CD4-positive, alpha-beta T cell (primary cell): ENCODE measurements at regions of chr12 and their contacts with region 1.

Region 1: DNA sequence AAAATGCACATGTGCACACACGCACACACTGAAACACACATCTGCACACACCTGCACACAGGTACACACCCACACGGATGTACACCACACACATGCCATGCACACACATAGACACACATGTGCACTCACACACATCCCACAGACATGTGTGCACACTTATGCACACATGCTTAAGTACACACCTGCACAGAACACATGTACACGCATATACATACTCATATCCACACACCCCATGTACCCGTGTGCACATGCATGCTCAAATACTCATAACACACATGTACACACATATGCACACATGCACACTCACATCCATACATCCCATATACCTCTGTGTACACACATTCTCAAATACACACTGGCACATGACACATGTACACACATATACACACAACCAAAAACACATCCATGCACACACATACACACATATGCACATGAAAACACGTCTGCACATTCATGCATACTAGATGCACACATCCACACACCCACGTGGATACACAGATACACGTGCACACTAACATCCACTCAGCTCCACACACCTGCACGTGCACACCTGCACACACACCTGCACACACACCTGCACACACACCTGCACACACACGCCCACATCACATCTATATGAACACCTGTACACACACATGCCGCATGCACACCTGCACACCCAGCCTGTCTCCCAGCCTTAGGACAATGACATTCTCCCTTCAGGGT is 336.7 kb downstream of the ADGRD1 start:
- DNase-seq: no peak
- ATAC-seq: no peak
- H3K4me3 ChIP-seq: no peak overlapping the region
- H3K4me3 Mint-ChIP-seq: no peak overlapping the region
- H3K27ac ChIP-seq: no peak overlapping the region
- H3K27ac Mint-ChIP-seq: no peak overlapping the region
- H3K4me1 ChIP-seq: no peaks in the 10 kb centered on the region
- H3K4me1 Mint-ChIP-seq: no peaks in the 10 kb centered on the region
- H3K27me3 ChIP-seq: no peaks in the 10 kb centered on the region
- H3K27me3 Mint-ChIP-seq: peaks cover 11% of the 10 kb centered on the region
- CTCF ChIP-seq: no peak

Region 2: GRCh38 chr12:131279281-131279921 is 11.0 kb before region 1 on chr12:
- CTCF ChIA-PET with region 1: no interaction called
- POLR2A ChIA-PET with region 1: no interaction called
- intact Hi-C with region 1: no loop called
- DNase-seq: no peak
- ATAC-seq: no peak
- H3K4me3 ChIP-seq: no peak overlapping the region
- H3K4me3 Mint-ChIP-seq: no peak overlapping the region
- H3K27ac ChIP-seq: no peak overlapping the region
- H3K27ac Mint-ChIP-seq: no peak overlapping the region
- H3K4me1 ChIP-seq: no peaks in the 10 kb centered on the region
- H3K4me1 Mint-ChIP-seq: no peaks in the 10 kb centered on the region
- H3K27me3 ChIP-seq: no peaks in the 10 kb centered on the region
- H3K27me3 Mint-ChIP-seq: no peaks in the 10 kb centered on the region
- CTCF ChIP-seq: no peak

Region 3: GRCh38 chr12:131390384-131391334 is 100.3 kb after region 1 on chr12:
- CTCF ChIA-PET with region 1: no interaction called
- POLR2A ChIA-PET with region 1: no interaction called
- intact Hi-C with region 1: no loop called
- DNase-seq: no peak
- ATAC-seq: no peak
- H3K4me3 ChIP-seq: no peak overlapping the region
- H3K4me3 Mint-ChIP-seq: no peak overlapping the region
- H3K27ac ChIP-seq: no peak overlapping the region
- H3K27ac Mint-ChIP-seq: no peak overlapping the region
- H3K4me1 ChIP-seq: no peaks in the 10 kb centered on the region
- H3K4me1 Mint-ChIP-seq: no peaks in the 10 kb centered on the region
- H3K27me3 ChIP-seq: no peaks in the 10 kb centered on the region
- H3K27me3 Mint-ChIP-seq: no peaks in the 10 kb centered on the region
- CTCF ChIP-seq: no peak

Region 4: GRCh38 chr12:131673888-131674257 is 383.5 kb after region 1 on chr12:
- CTCF ChIA-PET with region 1: no interaction called
- POLR2A ChIA-PET with region 1: no interaction called
- intact Hi-C with region 1: loop called in 1 of 2 experiments (anchors 5 kb)
- DNase-seq: no peak
- ATAC-seq: no peak
- H3K4me3 ChIP-seq: no peak overlapping the region
- H3K4me3 Mint-ChIP-seq: no peak overlapping the region
- H3K27ac ChIP-seq: no peak overlapping the region
- H3K27ac Mint-ChIP-seq: no peak overlapping the region
- H3K4me1 ChIP-seq: no peaks in the 10 kb centered on the region
- H3K4me1 Mint-ChIP-seq: no peaks in the 10 kb centered on the region
- H3K27me3 ChIP-seq: no peaks in the 10 kb centered on the region
- H3K27me3 Mint-ChIP-seq: no peaks in the 10 kb centered on the region
- CTCF ChIP-seq: no peak